ENCODE measurements at regions of chr17 and their contacts with region 1.

Region 1: GRCh38 chr17:54900457-54901229 is at the start of gene TOM1L1:
- DNase-seq: peak; percentile 87
- ATAC-seq: peak; percentile 96
- H3K4me3 ChIP-seq: peak within 1 kb of the TSS; percentile 68 to 92 (median 91)
- H3K27ac ChIP-seq: peak within 1 kb of the TSS; percentile 41
- H3K4me1 ChIP-seq: peaks cover 12% of the 10 kb centered on the region
- H3K27me3 ChIP-seq: no peaks in the 10 kb centered on the region; a peak in 1 of 5 replicates
- CTCF ChIP-seq: peak; percentile 71
- EP300 ChIP-seq: peak; percentile 21 to 48; a peak in 1 of 4 replicates
- POLR2A ChIP-seq: peak; percentile 65 to 69
- RAD21 ChIP-seq: peak; percentile 75
- total RNA-seq, gene TOM1L1: 45.3 and 61.1 TPM in 2 replicates

Region 2: GRCh38 chr17:53924530-53925455 is 975.9 kb before region 1 on chr17:
- CTCF ChIA-PET with region 1: no interaction called
- POLR2A ChIA-PET with region 1: no interaction called
- in situ Hi-C with region 1: loop called (anchors 25 kb)
- intact Hi-C with region 1: loop called (anchors 2 kb)
- DNase-seq: peak; percentile 100
- ATAC-seq: peak; percentile 100
- H3K4me3 ChIP-seq: peak overlapping the region in 2 of 3 experiments; percentile 8 to 32; a peak in 2 of 6 replicates
- H3K27ac ChIP-seq: peak overlapping the region; percentile 80
- H3K4me1 ChIP-seq: peaks cover 36% of the 10 kb centered on the region
- H3K27me3 ChIP-seq: no peaks in the 10 kb centered on the region
- CTCF ChIP-seq: no peak
- EP300 ChIP-seq: peak; percentile 90 to 96
- POLR2A ChIP-seq: no peak
- RAD21 ChIP-seq: no peak

Region 3: GRCh38 chr17:54968262-54968987 is 67.8 kb after region 1 on chr17 and contains the starts of genes COX11 and STXBP4:
- CTCF ChIA-PET with region 1: no interaction called
- POLR2A ChIA-PET with region 1: interaction called, 3 read pairs
- in situ Hi-C with region 1: no loop called
- intact Hi-C with region 1: loop called (anchors 1 kb)
- DNase-seq: peak; percentile 97
- ATAC-seq: peak; percentile 89
- H3K4me3 ChIP-seq: peak within 1 kb of the TSS; percentile 79 to 99 (median 93)
- H3K27ac ChIP-seq: peak within 1 kb of the TSS; percentile 82
- H3K4me1 ChIP-seq: peaks cover 68% of the 10 kb centered on the region
- H3K27me3 ChIP-seq: no peaks in the 10 kb centered on the region; a peak in 1 of 5 replicates
- CTCF ChIP-seq: peak; percentile 62
- EP300 ChIP-seq: peak in 1 of 2 experiments; percentile 11; a peak in 1 of 4 replicates
- POLR2A ChIP-seq: peak; percentile 97 to 98
- RAD21 ChIP-seq: peak; percentile 36; the same call in 1 of the 2 replicates
- total RNA-seq, gene COX11: 203 and 230 TPM in 2 replicates
- total RNA-seq, gene STXBP4: 36.1 and 53.9 TPM in 2 replicates

Measured in HepG2 (cell line).